ENCODE measurements at regions of chr1 and their contacts with region 1.

Region 1: DNA sequence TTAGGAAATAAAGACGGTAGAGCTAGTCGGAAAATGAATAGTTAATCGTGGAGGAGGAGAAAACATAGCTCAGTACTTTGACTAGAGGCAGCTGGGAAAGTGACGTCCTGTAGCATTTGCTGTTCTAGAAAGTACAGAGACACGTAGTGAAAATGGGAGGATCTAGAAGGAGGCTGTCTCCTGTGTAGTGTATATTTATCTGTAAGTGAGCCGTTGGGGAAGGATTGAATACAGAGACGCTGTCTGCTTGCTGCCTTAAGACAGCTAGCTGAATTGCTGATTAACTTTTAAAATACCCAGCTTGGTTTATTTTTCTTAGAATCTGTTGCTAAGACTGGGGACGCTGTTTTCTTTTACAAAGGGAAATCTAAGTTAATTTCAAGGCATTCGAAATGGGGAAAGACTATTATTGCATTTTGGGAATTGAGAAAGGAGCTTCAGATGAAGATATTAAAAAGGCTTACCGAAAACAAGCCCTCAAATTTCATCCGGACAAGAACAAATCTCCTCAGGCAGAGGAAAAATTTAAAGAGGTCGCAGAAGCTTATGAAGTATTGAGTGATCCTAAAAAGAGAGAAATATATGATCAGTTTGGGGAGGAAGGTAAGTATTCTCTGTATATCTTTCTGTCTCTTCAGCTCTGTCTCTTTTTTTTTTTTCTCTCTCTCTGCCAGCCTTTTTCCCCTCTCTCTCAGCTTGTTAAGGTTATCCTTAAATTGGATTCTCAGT is at the start of gene DNAJB4:
- DNase-seq: peak; percentile 66 to 96 (median 72)
- ATAC-seq: peak; percentile 84
- H3K4me3 ChIP-seq: peak within 1 kb of the TSS; percentile 49
- H3K27ac ChIP-seq: peak within 1 kb of the TSS; percentile 96
- H3K4me1 ChIP-seq: peaks cover 0 to 5% of the 10 kb centered on the region in 2 experiments; a peak in 3 of 5 replicates
- H3K27me3 ChIP-seq: no peaks in the 10 kb centered on the region
- CTCF ChIP-seq: no peak
- EP300 ChIP-seq: no peak; the same call in 1 of the 2 replicates
- POLR2A ChIP-seq: no peak
- RAD21 ChIP-seq: no peak
- polyA plus RNA-seq, gene DNAJB4: 18.3 to 27.7 TPM

Region 2: GRCh38 chr1:77683160-77684148 is 321.4 kb before region 1 on chr1:
- CTCF ChIA-PET with region 1: no interaction called
- POLR2A ChIA-PET with region 1: no interaction called
- in situ Hi-C with region 1: no loop called
- intact Hi-C with region 1: loop called (anchors 2 kb)
- DNase-seq: peak; percentile 88 to 94 (median 90)
- ATAC-seq: peak; percentile 80
- H3K4me3 ChIP-seq: peak overlapping the region; percentile 66
- H3K27ac ChIP-seq: peak overlapping the region; percentile 96
- H3K4me1 ChIP-seq: peaks cover 5 to 7% of the 10 kb centered on the region in 2 experiments
- H3K27me3 ChIP-seq: no peaks in the 10 kb centered on the region
- CTCF ChIP-seq: peak; percentile 83 to 94 (median 85)
- EP300 ChIP-seq: no peak; the same call in 1 of the 2 replicates
- POLR2A ChIP-seq: peak; percentile 83
- RAD21 ChIP-seq: peak; percentile 76 to 80

Region 3: GRCh38 chr1:77978969-77979876 is 25.7 kb before region 1 on chr1 and contains the start of gene FUBP1:
- CTCF ChIA-PET with region 1: interaction called, 3 read pairs
- POLR2A ChIA-PET with region 1: interaction called, 199 read pairs
- in situ Hi-C with region 1: no loop called
- intact Hi-C with region 1: loop called (anchors 1 kb)
- DNase-seq: peak; percentile 79 to 99 (median 84)
- ATAC-seq: peak; percentile 82
- H3K4me3 ChIP-seq: peak within 1 kb of the TSS; percentile 67
- H3K27ac ChIP-seq: peak within 1 kb of the TSS; percentile 96
- H3K4me1 ChIP-seq: peaks cover 0 to 5% of the 10 kb centered on the region in 2 experiments; a peak in 1 of 5 replicates
- H3K27me3 ChIP-seq: no peaks in the 10 kb centered on the region
- CTCF ChIP-seq: peak; percentile 67 to 83 (median 68)
- EP300 ChIP-seq: 0 out of 2 replicates have a peak, but pooled peaks have one; percentile 17
- POLR2A ChIP-seq: peak; percentile 98
- RAD21 ChIP-seq: peak; percentile 29 to 38; a peak in 3 of 4 replicates
- polyA plus RNA-seq, gene FUBP1: 104 to 170 TPM

Region 4: GRCh38 chr1:77994117-77994705 is 10.7 kb before region 1 on chr1:
- CTCF ChIA-PET with region 1: no interaction called
- POLR2A ChIA-PET with region 1: interaction called, 118 read pairs
- in situ Hi-C with region 1: no loop called
- intact Hi-C with region 1: no loop called
- DNase-seq: no peak
- ATAC-seq: no peak
- H3K4me3 ChIP-seq: no peak overlapping the region
- H3K27ac ChIP-seq: no peak overlapping the region
- H3K4me1 ChIP-seq: no peaks in the 10 kb centered on the region
- H3K27me3 ChIP-seq: no peaks in the 10 kb centered on the region
- CTCF ChIP-seq: no peak
- EP300 ChIP-seq: no peak
- POLR2A ChIP-seq: no peak
- RAD21 ChIP-seq: no peak

Region 5: GRCh38 chr1:78032996-78033796 is 28.3 kb after region 1 on chr1:
- CTCF ChIA-PET with region 1: no interaction called
- POLR2A ChIA-PET with region 1: interaction called, 29 read pairs
- in situ Hi-C with region 1: no loop called
- intact Hi-C with region 1: no loop called
- DNase-seq: peak in 1 of 4 experiments; percentile 51
- ATAC-seq: peak; percentile 87
- H3K4me3 ChIP-seq: no peak overlapping the region
- H3K27ac ChIP-seq: 0 out of 3 replicates have a peak overlapping the region, but pooled peaks have one; percentile 27
- H3K4me1 ChIP-seq: peaks cover 0 to 11% of the 10 kb centered on the region in 2 experiments; a peak in 2 of 5 replicates
- H3K27me3 ChIP-seq: no peaks in the 10 kb centered on the region
- CTCF ChIP-seq: no peak
- EP300 ChIP-seq: no peak
- POLR2A ChIP-seq: no peak
- RAD21 ChIP-seq: no peak

Region 6: GRCh38 chr1:78075621-78076020 is 70.7 kb after region 1 on chr1:
- CTCF ChIA-PET with region 1: no interaction called
- POLR2A ChIA-PET with region 1: interaction called, 10 read pairs
- in situ Hi-C with region 1: no loop called
- intact Hi-C with region 1: no loop called
- DNase-seq: no peak
- ATAC-seq: no peak
- H3K4me3 ChIP-seq: no peak overlapping the region
- H3K27ac ChIP-seq: no peak overlapping the region
- H3K4me1 ChIP-seq: no peaks in the 10 kb centered on the region
- H3K27me3 ChIP-seq: no peaks in the 10 kb centered on the region
- CTCF ChIP-seq: no peak
- EP300 ChIP-seq: no peak
- POLR2A ChIP-seq: no peak
- RAD21 ChIP-seq: no peak

Region 7: DNA sequence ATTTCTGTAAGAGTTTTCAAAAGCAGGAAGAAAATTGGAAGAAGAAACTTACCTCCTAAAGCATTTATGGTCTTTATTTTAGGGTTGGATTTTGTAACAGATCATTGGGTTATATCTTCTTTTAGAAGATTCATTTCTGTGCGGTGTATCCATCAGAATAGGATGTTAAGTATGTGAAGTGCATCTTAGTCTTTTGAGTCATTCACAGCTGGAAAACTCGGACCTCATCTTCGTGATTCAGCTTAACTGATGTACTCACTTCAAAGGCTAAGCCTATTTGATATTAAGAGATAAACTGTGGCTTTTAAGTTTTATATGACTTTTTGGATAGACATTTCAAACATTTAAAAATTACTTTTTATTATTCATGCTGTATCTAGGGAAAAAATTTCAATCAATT is 97.2 kb after region 1 on chr1:
- CTCF ChIA-PET with region 1: no interaction called
- POLR2A ChIA-PET with region 1: interaction called, 15 read pairs
- in situ Hi-C with region 1: no loop called
- intact Hi-C with region 1: no loop called
- DNase-seq: no peak
- ATAC-seq: no peak
- H3K4me3 ChIP-seq: no peak overlapping the region
- H3K27ac ChIP-seq: no peak overlapping the region
- H3K4me1 ChIP-seq: no peaks in the 10 kb centered on the region
- H3K27me3 ChIP-seq: no peaks in the 10 kb centered on the region
- CTCF ChIP-seq: no peak
- EP300 ChIP-seq: no peak
- POLR2A ChIP-seq: no peak
- RAD21 ChIP-seq: no peak